Mammary epithelial cell (primary cell): ENCODE measurements at regions of chr6 and their contacts with region 1.

Region 1: GRCh38 chr6:34378470-34378869 is 14.0 kb downstream of the NUDT3 start:
- DNase-seq: no peak
- H3K4me3 ChIP-seq: no peak overlapping the region
- H3K27ac ChIP-seq: no peak overlapping the region
- H3K4me1 ChIP-seq: no peaks in the 10 kb centered on the region
- H3K27me3 ChIP-seq: no peaks in the 10 kb centered on the region
- CTCF ChIP-seq: no peak

Region 2: DNA sequence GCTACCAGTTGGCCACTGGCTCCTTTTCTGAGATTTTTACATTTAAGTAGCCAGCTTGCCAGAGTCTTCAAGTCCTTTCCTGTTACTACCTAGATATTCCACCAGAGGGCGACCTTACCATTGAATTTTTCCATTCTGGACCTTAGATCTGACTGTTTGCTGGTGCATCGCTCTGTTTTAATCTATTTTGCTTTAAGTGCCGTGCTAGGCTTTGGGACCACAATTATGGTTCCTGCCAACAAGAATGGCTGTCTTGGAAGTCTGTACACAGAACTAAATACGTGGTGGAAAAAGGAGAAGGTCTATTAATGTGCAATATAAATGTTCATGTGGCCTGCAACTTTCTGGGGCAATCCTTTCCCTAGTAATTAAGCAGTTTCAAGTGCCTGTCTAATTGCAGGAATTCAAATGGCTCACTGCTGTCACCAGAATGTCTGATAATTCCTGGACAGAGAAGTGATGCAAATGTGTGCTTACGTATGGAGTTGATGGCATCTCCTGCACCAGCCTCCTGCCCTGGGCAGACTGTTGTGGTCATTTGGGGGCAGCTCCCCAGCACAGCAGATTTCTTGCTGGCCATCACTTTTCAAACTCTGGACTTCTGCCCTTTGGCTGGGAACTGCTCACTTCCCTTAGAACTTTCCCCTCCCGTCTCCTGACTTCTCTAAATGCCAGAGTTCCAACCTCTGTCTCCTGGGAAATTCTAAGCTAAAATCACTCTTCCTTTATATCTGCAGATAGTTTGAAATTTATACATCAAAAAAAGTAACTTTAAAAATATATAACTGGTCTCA is 1363.4 kb before region 1 on chr6:
- CTCF ChIA-PET with region 1: no interaction called
- dilution Hi-C with region 1: no loop called
- in situ Hi-C with region 1: no loop called
- intact Hi-C with region 1: no loop called
- DNase-seq: peak; percentile 52
- H3K4me3 ChIP-seq: no peak overlapping the region
- H3K27ac ChIP-seq: no peak overlapping the region
- H3K4me1 ChIP-seq: no peaks in the 10 kb centered on the region
- H3K27me3 ChIP-seq: peaks cover 11% of the 10 kb centered on the region
- CTCF ChIP-seq: peak; percentile 67 to 73

Region 3: GRCh38 chr6:34315780-34316179 is 62.7 kb before region 1 on chr6:
- CTCF ChIA-PET with region 1: no interaction called
- dilution Hi-C with region 1: loop called (anchors 5 kb)
- in situ Hi-C with region 1: no loop called
- intact Hi-C with region 1: no loop called
- DNase-seq: no peak
- H3K4me3 ChIP-seq: no peak overlapping the region
- H3K27ac ChIP-seq: no peak overlapping the region
- H3K4me1 ChIP-seq: no peaks in the 10 kb centered on the region
- H3K27me3 ChIP-seq: no peaks in the 10 kb centered on the region
- CTCF ChIP-seq: no peak